ENCODE measurements at regions of chr9 and their contacts with region 1.

Region 1: DNA sequence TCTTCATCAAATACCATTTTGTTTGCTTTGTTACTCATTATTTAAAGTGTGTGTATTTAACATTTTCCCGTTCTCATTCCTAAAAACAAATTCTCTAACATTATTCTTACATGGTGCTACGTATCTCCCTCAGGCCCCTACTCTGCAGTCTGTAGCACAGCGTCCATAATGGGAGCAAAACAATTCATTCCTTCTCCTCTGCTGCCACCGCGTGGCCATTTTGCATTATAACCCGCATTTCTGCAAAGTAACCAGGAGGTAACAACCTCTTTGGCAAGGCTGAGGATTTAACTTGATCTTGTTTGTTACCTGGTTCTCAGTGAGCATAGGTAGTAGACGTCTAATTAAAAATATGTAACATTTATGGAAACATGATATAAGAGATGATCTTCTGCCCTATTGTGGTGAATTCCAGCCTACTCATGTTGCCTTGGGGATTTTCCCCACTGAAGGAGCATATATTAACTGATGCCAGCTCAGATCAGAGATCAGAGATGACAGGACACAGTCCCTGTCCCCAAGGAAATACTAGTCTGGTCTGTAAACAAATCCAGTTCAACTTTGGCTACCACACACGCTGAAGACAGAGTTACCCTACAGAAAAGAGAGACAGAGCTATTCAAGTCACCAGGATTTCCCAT is 10.5 kb downstream of the OR1K1 start:
- DNase-seq: peak; percentile 74
- ATAC-seq: peak; percentile 96
- H3K4me3 ChIP-seq: no peak overlapping the region
- H3K27ac ChIP-seq: no peak overlapping the region
- H3K4me1 ChIP-seq: no peaks in the 10 kb centered on the region
- H3K27me3 ChIP-seq: no peaks in the 10 kb centered on the region
- CTCF ChIP-seq: peak; percentile 87
- POLR2A ChIP-seq: no peak
- RAD21 ChIP-seq: peak; percentile 94

Region 2: GRCh38 chr9:122092611-122093506 is 717.6 kb before region 1 on chr9 and contains the start of gene TTLL11:
- CTCF ChIA-PET with region 1: no interaction called
- POLR2A ChIA-PET with region 1: no interaction called
- dilution Hi-C with region 1: no loop called
- in situ Hi-C with region 1: no loop called
- intact Hi-C with region 1: loop called (anchors 10 kb)
- DNase-seq: peak; percentile 91
- ATAC-seq: peak; percentile 89
- H3K4me3 ChIP-seq: peak within 1 kb of the TSS; percentile 56
- H3K27ac ChIP-seq: peak within 1 kb of the TSS; percentile 46
- H3K4me1 ChIP-seq: peaks cover 9% of the 10 kb centered on the region
- H3K27me3 ChIP-seq: no peaks in the 10 kb centered on the region; the same call in none of the 2 replicates
- CTCF ChIP-seq: no peak
- POLR2A ChIP-seq: no peak
- RAD21 ChIP-seq: no peak
- total RNA-seq, gene TTLL11: 2.0 and 2.5 TPM in 2 replicates

Region 3: GRCh38 chr9:122125158-122125508 is 685.3 kb before region 1 on chr9:
- CTCF ChIA-PET with region 1: no interaction called
- POLR2A ChIA-PET with region 1: no interaction called
- dilution Hi-C with region 1: no loop called
- in situ Hi-C with region 1: loop called (anchors 5 kb)
- intact Hi-C with region 1: loop called (anchors 2 kb)
- DNase-seq: peak; percentile 76
- ATAC-seq: peak; percentile 79
- H3K4me3 ChIP-seq: no peak overlapping the region
- H3K27ac ChIP-seq: no peak overlapping the region
- H3K4me1 ChIP-seq: peaks cover 13% of the 10 kb centered on the region
- H3K27me3 ChIP-seq: no peaks in the 10 kb centered on the region; the same call in 1 of the 2 replicates
- CTCF ChIP-seq: peak; percentile 99
- POLR2A ChIP-seq: peak; percentile 70; the same call in 1 of the 2 replicates
- RAD21 ChIP-seq: peak; percentile 99

Region 4: DNA sequence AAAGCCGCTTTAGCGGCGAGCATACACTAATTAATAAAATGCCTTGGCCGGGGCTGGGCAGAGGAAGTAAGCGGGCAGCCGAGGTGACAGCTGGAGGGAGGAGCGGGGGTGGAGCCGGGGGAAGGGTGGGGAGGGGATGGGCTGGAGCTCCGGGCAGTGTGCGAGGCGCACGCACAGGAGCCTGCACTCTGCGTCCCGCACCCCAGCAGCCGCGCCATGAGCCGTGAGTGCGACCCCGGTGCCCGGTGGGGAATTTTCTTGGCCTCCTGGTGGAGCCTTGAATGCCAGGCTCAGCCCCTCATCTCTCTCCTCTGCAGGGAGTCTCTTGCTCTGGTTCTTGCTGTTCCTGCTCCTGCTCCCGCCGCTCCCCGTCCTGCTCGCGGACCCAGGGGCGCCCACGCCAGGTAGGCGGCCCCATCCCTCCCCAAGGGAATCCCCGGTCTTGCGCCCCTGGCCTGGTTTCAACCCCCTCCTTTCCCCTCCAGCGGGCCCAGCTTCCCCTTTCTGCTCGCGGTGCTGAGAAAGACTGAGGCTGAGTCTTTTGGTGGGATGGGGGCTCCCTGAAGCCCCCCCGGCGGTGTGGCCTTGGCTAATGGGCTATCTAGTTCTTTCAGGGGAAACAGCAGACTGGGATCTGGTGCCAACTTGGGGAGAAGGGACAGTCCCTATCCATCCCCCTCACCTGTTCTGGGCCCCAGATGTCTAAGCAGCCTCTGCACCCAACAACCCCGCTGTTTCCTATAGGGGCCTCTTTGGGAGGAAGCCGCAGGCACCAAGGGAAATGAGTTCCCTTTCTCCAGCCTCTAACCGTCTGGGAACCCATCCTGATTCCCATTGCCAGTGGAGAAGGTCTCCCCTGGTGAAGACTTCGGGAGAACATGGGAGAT is 439.3 kb before region 1 on chr9 and contains the start of gene PTGS1:
- CTCF ChIA-PET with region 1: no interaction called
- POLR2A ChIA-PET with region 1: no interaction called
- dilution Hi-C with region 1: no loop called
- in situ Hi-C with region 1: loop called (anchors 10 kb)
- intact Hi-C with region 1: no loop called
- DNase-seq: peak; percentile 38
- ATAC-seq: peak; percentile 66
- H3K4me3 ChIP-seq: peak within 1 kb of the TSS; percentile 81
- H3K27ac ChIP-seq: peak within 1 kb of the TSS; percentile 61
- H3K4me1 ChIP-seq: peaks cover 39% of the 10 kb centered on the region
- H3K27me3 ChIP-seq: no peaks in the 10 kb centered on the region
- CTCF ChIP-seq: no peak
- POLR2A ChIP-seq: no peak
- RAD21 ChIP-seq: no peak
- total RNA-seq, gene PTGS1: 21.1 and 24.7 TPM in 2 replicates

Region 5: DNA sequence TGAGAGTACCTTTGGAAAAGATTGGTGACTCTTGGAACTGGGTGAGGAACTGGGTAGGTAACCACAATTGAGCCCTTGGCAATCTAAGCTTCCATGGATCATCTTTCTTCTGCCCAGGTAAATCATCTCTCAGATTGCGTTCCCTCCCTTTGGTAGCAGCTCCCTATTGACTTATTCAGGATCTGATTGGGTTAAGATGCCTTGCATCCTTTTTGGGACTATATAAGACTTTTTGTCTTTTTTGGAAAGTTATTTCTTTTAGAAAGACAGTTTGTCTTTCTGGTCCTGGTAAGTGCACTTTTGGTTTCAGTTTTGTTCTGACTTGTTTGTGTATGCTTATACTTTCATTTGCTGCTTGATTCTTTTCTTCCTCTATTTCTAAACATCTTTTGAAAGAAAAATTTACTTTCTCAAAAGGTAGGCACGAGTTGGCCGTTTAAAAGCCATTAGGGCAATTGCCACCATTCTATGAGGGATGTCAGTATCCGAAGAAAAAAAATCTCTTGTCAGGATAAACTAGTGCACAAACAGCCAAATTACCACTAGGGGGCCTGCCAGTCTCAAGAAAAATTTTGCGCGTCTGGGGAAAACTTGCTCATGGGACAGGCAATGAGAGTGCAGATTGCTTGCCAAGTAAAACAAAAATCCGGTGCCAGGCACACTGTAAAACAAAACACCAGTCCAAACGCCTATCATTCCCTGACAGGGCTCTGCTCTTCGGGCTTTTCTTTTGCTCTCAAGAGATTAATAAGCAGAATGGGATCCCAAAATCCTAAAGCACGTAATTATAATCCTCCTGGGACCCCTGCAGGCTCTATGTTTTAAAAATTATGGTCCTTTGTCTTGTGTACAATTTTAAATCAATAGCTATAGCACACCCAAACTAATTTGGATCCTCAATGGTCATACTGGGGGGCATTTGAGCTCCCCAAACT is 345.5 kb before region 1 on chr9:
- CTCF ChIA-PET with region 1: interaction called, 7 read pairs
- POLR2A ChIA-PET with region 1: no interaction called
- dilution Hi-C with region 1: no loop called
- in situ Hi-C with region 1: loop called (anchors 5 kb)
- intact Hi-C with region 1: loop called (anchors 1 kb)
- DNase-seq: peak; percentile 91
- ATAC-seq: peak; percentile 77
- H3K4me3 ChIP-seq: peak overlapping the region; percentile 54; the same call in 1 of the 2 replicates
- H3K27ac ChIP-seq: peak overlapping the region; percentile 15; the same call in 1 of the 2 replicates
- H3K4me1 ChIP-seq: no peaks in the 10 kb centered on the region; the same call in 1 of the 2 replicates
- H3K27me3 ChIP-seq: no peaks in the 10 kb centered on the region
- CTCF ChIP-seq: peak; percentile 90
- POLR2A ChIP-seq: no peak
- RAD21 ChIP-seq: peak; percentile 79

Region 6: DNA sequence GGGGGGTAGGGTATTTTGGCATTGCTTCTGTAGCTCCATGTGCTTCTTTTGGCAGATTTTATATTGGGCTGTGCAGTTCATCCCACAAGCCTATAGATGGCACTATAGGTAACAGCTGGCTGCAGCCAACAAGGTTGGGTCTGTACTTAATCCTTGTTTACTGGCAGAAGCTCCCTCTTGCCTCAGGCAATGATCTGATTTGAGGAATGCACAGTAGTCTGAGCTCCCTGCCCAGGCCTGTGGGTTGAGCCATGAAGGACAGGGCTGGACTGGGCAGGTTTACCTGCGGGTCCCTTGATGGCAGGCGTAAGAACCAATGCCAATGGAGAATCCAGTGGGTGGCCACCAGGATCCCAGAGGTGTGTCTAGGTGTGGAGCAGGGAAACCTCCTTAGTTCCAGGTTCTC is 311.5 kb before region 1 on chr9:
- CTCF ChIA-PET with region 1: interaction called, 4 read pairs
- POLR2A ChIA-PET with region 1: no interaction called
- dilution Hi-C with region 1: no loop called
- in situ Hi-C with region 1: no loop called
- intact Hi-C with region 1: loop called (anchors 1 kb)
- DNase-seq: peak; percentile 43
- ATAC-seq: peak; percentile 94
- H3K4me3 ChIP-seq: no peak overlapping the region
- H3K27ac ChIP-seq: no peak overlapping the region
- H3K4me1 ChIP-seq: no peaks in the 10 kb centered on the region
- H3K27me3 ChIP-seq: peaks cover 9% of the 10 kb centered on the region; the same call in 1 of the 2 replicates
- CTCF ChIP-seq: peak; percentile 68
- POLR2A ChIP-seq: no peak
- RAD21 ChIP-seq: peak; percentile 51

Region 7: DNA sequence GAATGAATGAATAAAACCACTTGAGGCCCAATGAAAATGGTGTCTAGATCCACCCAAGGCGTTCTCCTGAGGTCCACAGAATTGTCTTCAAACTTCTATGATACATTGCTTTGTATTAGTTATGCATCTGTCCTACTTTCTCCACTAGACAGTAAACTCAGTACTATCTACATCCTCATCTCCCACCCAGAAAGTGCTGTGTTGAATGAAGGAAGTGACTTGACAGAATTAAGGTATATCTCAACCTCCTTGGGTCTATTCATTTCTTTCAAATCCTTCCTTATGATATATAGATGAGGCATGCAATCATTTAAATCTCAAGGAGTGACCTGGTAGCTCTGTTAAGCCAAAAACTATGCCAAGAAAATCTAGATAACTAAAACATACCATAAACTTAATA is 33.7 kb after region 1 on chr9:
- CTCF ChIA-PET with region 1: no interaction called
- POLR2A ChIA-PET with region 1: no interaction called
- dilution Hi-C with region 1: no loop called
- in situ Hi-C with region 1: no loop called
- intact Hi-C with region 1: no loop called
- DNase-seq: no peak
- ATAC-seq: no peak
- H3K4me3 ChIP-seq: no peak overlapping the region
- H3K27ac ChIP-seq: no peak overlapping the region
- H3K4me1 ChIP-seq: no peaks in the 10 kb centered on the region
- H3K27me3 ChIP-seq: no peaks in the 10 kb centered on the region
- CTCF ChIP-seq: no peak
- POLR2A ChIP-seq: no peak
- RAD21 ChIP-seq: no peak

Region 8: GRCh38 chr9:122875523-122875922 is 65.1 kb after region 1 on chr9:
- CTCF ChIA-PET with region 1: no interaction called
- POLR2A ChIA-PET with region 1: no interaction called
- dilution Hi-C with region 1: no loop called
- in situ Hi-C with region 1: no loop called
- intact Hi-C with region 1: no loop called
- DNase-seq: no peak
- ATAC-seq: no peak
- H3K4me3 ChIP-seq: no peak overlapping the region
- H3K27ac ChIP-seq: no peak overlapping the region
- H3K4me1 ChIP-seq: no peaks in the 10 kb centered on the region
- H3K27me3 ChIP-seq: no peaks in the 10 kb centered on the region
- CTCF ChIP-seq: no peak
- POLR2A ChIP-seq: no peak
- RAD21 ChIP-seq: no peak

Region 9: GRCh38 chr9:122954253-122954691 is 143.8 kb after region 1 on chr9:
- CTCF ChIA-PET with region 1: no interaction called
- POLR2A ChIA-PET with region 1: no interaction called
- dilution Hi-C with region 1: no loop called
- in situ Hi-C with region 1: no loop called
- intact Hi-C with region 1: no loop called
- DNase-seq: peak; percentile 68
- ATAC-seq: peak; percentile 94
- H3K4me3 ChIP-seq: no peak overlapping the region
- H3K27ac ChIP-seq: peak overlapping the region; percentile 55; the same call in 1 of the 2 replicates
- H3K4me1 ChIP-seq: peaks cover 3% of the 10 kb centered on the region; the same call in 1 of the 2 replicates
- H3K27me3 ChIP-seq: no peaks in the 10 kb centered on the region
- CTCF ChIP-seq: no peak
- POLR2A ChIP-seq: no peak
- RAD21 ChIP-seq: no peak